Activated CD4-positive, alpha-beta memory T cell treated with anti-CD3 and anti-CD28 coated beads, Interleukin-2, amount 10 ng/mL, durations not matched to agents 7 days and 5 days (primary cell): ENCODE measurements at regions of chr12 and their contacts with region 1.

Region 1: DNA sequence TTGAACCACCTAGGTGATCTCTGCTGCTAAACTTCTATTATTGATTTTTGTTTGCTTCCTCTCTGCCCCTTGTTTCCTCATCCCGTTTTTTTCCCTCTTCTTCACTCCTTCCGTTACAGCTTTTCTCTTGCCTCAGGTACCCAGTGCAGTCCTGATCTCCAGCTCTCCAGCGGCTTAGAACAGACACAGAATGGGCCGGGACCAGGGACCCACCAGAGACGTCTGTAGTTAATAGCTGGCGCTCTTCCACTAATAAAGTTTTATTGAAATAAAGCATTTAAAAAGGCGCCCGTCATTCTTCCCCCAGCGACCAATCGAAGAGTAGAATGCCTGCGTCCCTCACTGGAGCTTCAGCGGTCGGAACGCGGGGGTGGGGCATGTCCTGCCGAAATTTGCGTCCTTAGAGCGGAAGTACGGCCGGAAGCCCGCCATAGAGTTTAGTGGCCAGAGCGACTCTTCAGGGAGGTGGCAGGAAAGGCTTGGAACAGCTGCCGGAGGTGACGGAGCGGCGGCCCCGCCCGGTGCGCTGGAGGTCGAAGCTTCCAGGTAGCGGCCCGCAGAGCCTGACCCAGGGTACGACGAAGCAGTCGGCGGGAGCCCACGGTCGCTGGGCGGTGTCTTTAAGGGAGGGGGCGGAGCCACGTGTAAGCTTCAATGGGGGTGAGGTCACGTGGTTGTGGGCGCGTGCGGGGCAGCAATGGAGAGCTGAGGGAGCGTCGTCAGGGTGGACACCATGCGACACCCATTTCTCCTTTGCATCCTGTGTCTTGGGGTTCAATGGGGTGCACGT is at the start of gene COPS7A:
- DNase-seq: peak; percentile 99
- H3K4me3 Mint-ChIP-seq: peak within 1 kb of the TSS; percentile 84
- H3K27ac Mint-ChIP-seq: peak within 1 kb of the TSS; percentile 92
- H3K4me1 Mint-ChIP-seq: peaks cover 22% of the 10 kb centered on the region
- H3K27me3 Mint-ChIP-seq: no peaks in the 10 kb centered on the region
- total RNA-seq, gene COPS7A: 28.4 to 29.0 TPM

Region 2: DNA sequence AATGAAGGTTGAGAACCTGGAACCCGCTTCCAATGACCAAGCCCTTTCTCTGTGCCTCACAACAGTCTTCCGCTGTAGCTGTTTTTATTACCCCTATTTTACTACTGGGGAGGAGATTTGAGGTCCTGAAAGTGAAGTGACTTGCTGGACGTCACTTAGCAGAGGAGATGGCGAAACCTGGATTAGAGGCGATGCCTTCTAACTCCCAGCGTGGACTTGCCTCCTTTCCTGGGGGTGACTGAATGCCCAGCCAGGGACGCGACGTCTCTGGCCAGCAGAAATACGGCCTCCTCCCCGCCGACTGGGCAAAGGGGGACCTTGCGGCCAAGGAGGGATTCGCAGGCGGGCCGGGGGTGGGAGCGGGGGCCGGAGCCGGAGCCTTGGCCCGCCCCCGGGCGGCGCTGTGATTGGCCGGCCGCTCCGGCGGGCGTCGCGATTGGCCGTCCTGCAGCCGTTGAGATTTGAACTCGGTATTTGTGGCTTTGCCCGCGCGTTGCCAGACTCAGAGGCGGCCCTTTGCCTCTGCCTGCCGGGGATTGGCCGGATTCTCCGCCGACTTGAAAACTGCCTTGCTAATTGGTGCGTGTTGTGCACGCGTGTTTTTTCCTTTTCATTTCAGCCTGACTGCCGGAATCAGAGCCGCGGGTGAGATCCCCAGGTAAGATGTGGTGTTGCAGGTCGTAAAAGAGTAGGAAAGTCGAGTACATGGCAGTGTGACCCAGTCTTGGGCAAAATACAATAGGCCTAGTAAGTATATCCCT is 230.1 kb before region 1 on chr12 and contains the start of gene NCAPD2:
- CTCF ChIA-PET with region 1: no interaction called
- POLR2A ChIA-PET with region 1: interaction called, 12 read pairs
- DNase-seq: peak; percentile 98
- H3K4me3 Mint-ChIP-seq: peak within 1 kb of the TSS; percentile 96
- H3K27ac Mint-ChIP-seq: peak within 1 kb of the TSS; percentile 98
- H3K4me1 Mint-ChIP-seq: peaks cover 44% of the 10 kb centered on the region
- H3K27me3 Mint-ChIP-seq: no peaks in the 10 kb centered on the region
- total RNA-seq, gene NCAPD2: 153 to 156 TPM

Region 3: GRCh38 chr12:6647083-6647604 is 76.7 kb before region 1 on chr12 and contains the start of gene ACRBP:
- CTCF ChIA-PET with region 1: no interaction called
- POLR2A ChIA-PET with region 1: no interaction called
- DNase-seq: peak; percentile 43
- H3K4me3 Mint-ChIP-seq: peak within 1 kb of the TSS; percentile 47
- H3K27ac Mint-ChIP-seq: no peak within 1 kb of the TSS
- H3K4me1 Mint-ChIP-seq: peaks cover 12% of the 10 kb centered on the region
- H3K27me3 Mint-ChIP-seq: peaks cover 9% of the 10 kb centered on the region
- total RNA-seq, gene ACRBP: 1.8 TPM

Region 4: DNA sequence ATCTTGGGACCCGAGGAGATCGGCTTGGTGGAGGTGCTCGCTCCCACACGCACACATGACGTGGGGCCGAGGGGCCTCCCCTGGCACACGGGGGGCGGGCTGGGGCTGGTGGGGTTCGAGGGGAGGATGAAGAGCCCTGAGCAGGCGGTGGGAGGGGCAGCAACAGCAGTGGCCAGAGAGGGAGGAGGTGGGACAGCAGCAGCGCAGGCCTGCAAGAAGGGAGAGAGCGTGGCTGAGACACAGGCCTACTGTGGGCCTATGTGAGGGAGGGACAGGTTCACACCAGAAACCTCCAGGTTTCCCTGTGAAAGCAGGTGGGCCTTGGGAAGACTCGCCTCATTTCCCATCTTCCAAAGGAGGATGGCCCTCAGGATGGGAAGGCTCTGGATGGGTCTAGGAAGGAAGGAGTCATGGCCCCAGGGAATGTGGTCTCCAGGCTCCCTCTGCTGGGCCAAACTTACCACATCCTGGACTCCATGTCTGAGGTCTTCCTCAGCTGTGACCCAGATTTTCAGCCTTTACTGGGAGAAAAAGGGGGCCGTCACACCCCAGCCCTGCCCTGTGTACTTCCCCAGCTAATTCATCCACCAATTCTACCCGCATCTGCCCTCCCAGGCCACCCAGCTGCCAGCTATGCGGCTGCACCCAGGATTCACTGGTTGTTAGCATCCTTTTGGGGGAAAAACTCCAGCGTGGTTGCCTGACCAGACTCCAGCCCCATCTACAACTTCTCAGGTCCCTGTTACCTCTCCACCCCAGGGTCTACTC is 26.0 kb before region 1 on chr12:
- CTCF ChIA-PET with region 1: interaction called, 5 read pairs
- POLR2A ChIA-PET with region 1: interaction called, 10 read pairs
- DNase-seq: peak; percentile 38
- H3K4me3 Mint-ChIP-seq: no peak overlapping the region
- H3K27ac Mint-ChIP-seq: no peak overlapping the region
- H3K4me1 Mint-ChIP-seq: peaks cover 22% of the 10 kb centered on the region
- H3K27me3 Mint-ChIP-seq: peaks cover 43% of the 10 kb centered on the region

Region 5: DNA sequence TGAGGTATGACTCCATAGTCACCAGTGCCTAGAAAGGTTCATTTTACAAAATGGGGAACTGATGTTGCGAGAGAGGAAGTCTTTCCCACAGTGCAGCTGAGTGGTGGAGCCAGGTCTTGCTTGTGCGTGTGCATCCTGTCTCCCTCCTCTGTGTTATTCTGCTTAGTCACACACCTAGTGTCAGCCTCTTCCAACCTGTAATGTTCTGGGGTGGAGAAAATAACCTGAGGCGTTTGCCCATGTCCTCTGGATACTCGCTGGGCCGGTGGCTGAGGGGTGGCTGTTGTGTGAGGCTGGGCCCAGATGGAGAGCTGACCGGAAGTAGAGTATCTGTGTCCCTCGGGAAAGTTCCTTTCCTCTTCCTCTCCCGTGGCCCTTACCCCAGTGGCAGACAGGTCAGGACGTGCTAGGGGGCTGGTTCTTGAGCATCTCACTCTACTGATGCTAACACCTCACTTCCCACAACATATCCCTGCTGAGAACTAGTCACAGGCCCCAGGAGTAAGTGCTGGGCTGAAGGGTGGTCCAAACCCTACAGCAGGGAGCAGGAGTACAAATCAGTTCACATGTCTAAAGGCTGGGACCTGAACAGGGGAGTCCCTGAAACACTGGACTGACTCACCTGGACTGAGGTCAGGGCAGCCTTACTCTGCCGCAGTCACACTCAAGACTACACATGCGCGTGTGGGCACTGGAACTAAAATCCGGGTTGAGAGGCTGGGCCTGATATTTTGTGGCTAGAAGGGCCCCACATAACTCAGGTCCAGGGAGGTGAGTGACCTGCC is 22.1 kb after region 1 on chr12:
- CTCF ChIA-PET with region 1: interaction called, 3 read pairs
- POLR2A ChIA-PET with region 1: interaction called, 10 read pairs
- DNase-seq: peak; percentile 45
- H3K4me3 Mint-ChIP-seq: no peak overlapping the region
- H3K27ac Mint-ChIP-seq: peak overlapping the region; percentile 89
- H3K4me1 Mint-ChIP-seq: peaks cover 22% of the 10 kb centered on the region
- H3K27me3 Mint-ChIP-seq: no peaks in the 10 kb centered on the region

Region 6: GRCh38 chr12:6792522-6793201 is 68.9 kb after region 1 on chr12:
- CTCF ChIA-PET with region 1: interaction called, 7 read pairs
- POLR2A ChIA-PET with region 1: interaction called, 21 read pairs
- DNase-seq: peak; percentile 70
- H3K4me3 Mint-ChIP-seq: peak overlapping the region; percentile 93
- H3K27ac Mint-ChIP-seq: peak overlapping the region; percentile 90
- H3K4me1 Mint-ChIP-seq: peaks cover 51% of the 10 kb centered on the region
- H3K27me3 Mint-ChIP-seq: no peaks in the 10 kb centered on the region

Region 7: DNA sequence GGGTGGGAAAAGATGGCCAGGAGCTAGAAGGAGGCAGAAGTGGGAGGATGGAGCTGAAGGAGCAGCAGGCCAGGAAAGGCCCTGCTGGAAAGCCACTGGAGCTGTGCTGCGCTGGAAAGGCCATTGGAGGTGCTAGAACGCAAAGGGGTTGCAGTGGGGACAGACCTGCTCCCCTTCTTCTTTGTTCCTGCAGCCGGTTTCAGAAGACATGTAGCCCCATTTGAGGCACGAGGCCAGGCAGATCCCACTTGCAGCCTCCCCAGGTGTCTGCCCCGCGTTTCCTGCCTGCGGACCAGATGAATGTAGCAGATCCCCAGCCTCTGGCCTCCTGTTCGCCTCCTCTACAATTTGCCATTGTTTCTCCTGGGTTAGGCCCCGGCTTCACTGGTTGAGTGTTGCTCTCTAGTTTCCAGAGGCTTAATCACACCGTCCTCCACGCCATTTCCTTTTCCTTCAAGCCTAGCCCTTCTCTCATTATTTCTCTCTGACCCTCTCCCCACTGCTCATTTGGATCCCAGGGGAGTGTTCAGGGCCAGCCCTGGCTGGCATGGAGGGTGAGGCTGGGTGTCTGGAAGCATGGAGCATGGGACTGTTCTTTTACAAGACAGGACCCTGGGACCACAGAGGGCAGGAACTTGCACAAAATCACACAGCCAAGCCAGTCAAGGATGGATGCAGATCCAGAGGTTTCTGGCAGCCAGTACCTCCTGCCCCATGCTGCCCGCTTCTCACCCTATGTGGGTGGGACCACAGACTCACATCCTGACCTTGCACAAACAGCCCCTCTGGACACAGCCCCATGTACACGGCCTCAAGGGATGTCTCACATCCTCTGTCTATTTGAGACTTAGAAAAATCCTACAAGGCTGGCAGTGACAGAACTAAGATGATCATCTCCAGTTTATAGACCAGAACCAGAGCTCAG is 95.6 kb after region 1 on chr12:
- CTCF ChIA-PET with region 1: no interaction called
- POLR2A ChIA-PET with region 1: no interaction called
- DNase-seq: no peak
- H3K4me3 Mint-ChIP-seq: no peak overlapping the region
- H3K27ac Mint-ChIP-seq: no peak overlapping the region
- H3K4me1 Mint-ChIP-seq: peaks cover 14% of the 10 kb centered on the region
- H3K27me3 Mint-ChIP-seq: peaks cover 24% of the 10 kb centered on the region

Region 8: GRCh38 chr12:6833189-6833890 is 109.5 kb after region 1 on chr12:
- CTCF ChIA-PET with region 1: interaction called, 14 read pairs
- POLR2A ChIA-PET with region 1: interaction called, 10 read pairs
- DNase-seq: no peak
- H3K4me3 Mint-ChIP-seq: no peak overlapping the region
- H3K27ac Mint-ChIP-seq: no peak overlapping the region
- H3K4me1 Mint-ChIP-seq: peaks cover 17% of the 10 kb centered on the region
- H3K27me3 Mint-ChIP-seq: peaks cover 38% of the 10 kb centered on the region